Activated naive CD4-positive, alpha-beta T cell treated with anti-CD3 and anti-CD28 coated beads for 36 hours (primary cell): ENCODE measurements at regions of chr16 and their contacts with region 1.

Region 1: DNA sequence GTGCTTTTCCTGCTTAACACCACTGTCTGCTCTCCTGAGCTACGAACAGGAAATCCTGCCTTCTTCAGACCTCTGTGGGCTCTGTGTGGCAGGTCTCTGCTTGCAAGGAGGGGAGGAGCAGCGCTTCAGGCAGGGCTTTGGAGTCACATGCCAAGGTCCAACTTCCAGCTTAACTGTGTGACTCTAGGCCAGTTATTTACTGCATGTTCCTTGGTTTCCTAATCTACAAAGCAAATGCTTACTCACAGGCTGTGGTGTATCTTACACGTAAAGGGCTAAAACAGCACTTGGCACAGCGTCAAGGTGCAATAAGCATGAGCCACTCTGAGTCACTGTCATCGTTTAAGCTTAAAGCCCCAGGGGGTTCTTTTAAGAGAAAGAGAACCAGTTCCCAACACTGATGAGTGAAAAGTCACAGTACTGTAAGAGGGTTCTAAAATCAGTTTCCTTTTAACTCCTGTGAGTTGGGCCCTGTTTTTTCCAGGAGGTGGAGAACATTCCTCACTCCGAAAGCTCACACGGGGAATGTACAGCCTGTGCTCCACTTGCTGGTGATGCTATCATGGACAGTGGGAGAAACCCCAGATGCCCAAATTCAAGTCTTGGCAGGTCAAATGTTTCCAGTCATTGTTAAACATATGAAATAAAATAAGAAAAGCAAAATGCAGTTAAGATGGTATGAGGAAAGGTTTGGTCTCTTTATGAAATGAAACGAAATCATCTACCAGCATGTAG is 54.1 kb upstream of the BCAR1 start:
- DNase-seq: peak; percentile 94
- H3K4me3 Mint-ChIP-seq: peak overlapping the region; percentile 36
- H3K27ac Mint-ChIP-seq: peak overlapping the region; percentile 90
- H3K4me1 Mint-ChIP-seq: peaks cover 29% of the 10 kb centered on the region
- H3K27me3 Mint-ChIP-seq: no peaks in the 10 kb centered on the region

Region 2: DNA sequence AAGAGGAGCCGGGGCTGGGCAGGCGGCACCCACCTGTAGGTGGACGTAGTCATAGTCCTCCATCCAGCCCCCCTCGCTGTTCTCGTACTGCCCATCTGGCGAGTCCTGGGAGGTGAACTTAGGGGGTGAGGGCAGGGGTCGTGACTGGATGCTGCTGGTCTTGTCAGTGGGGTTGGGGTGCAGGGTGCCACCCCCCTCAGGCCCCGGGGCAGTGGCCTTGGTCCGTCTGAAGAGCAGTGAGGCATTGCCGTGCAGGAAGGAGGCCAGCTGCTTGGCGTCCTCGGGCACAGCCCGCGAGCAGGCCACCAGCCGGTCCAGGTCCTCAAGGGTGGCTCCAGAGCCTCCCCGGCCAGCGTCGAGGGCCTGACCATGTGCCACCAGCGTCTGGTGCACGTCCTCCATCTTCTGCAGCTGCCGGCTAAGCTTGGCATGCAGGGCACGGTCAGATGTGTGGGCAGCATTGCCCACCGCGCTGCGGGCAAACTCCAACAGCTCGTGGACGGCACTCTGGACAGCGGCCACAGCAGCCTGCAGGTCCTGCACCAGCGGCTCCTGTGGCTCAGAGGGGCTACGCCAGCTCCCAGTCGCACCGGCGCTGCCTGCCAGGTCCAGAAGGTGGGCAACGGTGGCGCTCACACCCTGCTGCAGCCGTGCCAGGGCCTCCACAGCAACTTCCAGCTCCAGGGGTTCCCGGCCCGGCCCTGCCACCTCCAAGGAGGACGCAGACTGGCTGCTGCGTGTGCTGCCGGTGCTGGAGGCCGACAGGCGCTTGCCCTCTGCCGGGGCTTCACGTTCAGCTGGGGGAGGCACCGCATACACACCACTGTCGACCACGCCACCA is 70.5 kb before region 1 on chr16:
- CTCF ChIA-PET with region 1: interaction called, 16 read pairs
- intact Hi-C with region 1: loop called (anchors 5 kb)
- DNase-seq: no peak
- H3K4me3 Mint-ChIP-seq: no peak overlapping the region
- H3K27ac Mint-ChIP-seq: no peak overlapping the region
- H3K4me1 Mint-ChIP-seq: peaks cover 6% of the 10 kb centered on the region
- H3K27me3 Mint-ChIP-seq: no peaks in the 10 kb centered on the region

Region 3: GRCh38 chr16:75294773-75295459 is 10.6 kb before region 1 on chr16:
- CTCF ChIA-PET with region 1: no interaction called
- intact Hi-C with region 1: no loop called
- DNase-seq: no peak
- H3K4me3 Mint-ChIP-seq: no peak overlapping the region
- H3K27ac Mint-ChIP-seq: no peak overlapping the region
- H3K4me1 Mint-ChIP-seq: no peaks in the 10 kb centered on the region
- H3K27me3 Mint-ChIP-seq: no peaks in the 10 kb centered on the region

Region 4: GRCh38 chr16:75319513-75320411 is 14.2 kb after region 1 on chr16:
- CTCF ChIA-PET with region 1: interaction called, 3 read pairs
- intact Hi-C with region 1: loop called (anchors 1 kb)
- DNase-seq: peak; percentile 40
- H3K4me3 Mint-ChIP-seq: no peak overlapping the region
- H3K27ac Mint-ChIP-seq: no peak overlapping the region
- H3K4me1 Mint-ChIP-seq: peaks cover 35% of the 10 kb centered on the region
- H3K27me3 Mint-ChIP-seq: no peaks in the 10 kb centered on the region

Region 5: DNA sequence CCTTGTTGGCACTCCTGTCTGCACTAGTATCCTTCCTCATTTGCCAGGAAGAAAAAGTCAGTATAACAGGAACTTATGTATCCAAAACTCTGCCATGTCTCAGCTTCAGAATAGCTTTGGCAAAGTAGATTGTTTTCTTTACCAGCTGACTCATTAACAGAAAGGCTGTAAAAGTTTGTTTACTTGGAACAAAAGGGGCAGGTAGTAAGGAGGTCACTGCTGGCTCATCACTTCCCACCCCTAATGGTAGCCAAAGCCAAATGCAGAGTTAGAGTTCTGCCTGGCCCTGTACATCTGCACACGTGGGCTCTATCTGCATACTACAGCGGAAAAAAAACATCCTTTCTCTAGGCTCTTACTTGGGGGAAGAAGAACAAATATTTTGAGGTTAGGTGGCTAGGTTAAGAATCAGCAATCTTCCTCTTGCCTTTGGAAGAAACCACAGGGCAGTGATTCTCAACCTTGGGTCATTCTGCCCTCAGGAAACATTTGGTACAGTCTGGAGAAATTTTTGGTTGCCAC is 36.8 kb after region 1 on chr16:
- CTCF ChIA-PET with region 1: no interaction called
- intact Hi-C with region 1: no loop called
- DNase-seq: no peak
- H3K4me3 Mint-ChIP-seq: no peak overlapping the region
- H3K27ac Mint-ChIP-seq: no peak overlapping the region
- H3K4me1 Mint-ChIP-seq: no peaks in the 10 kb centered on the region
- H3K27me3 Mint-ChIP-seq: no peaks in the 10 kb centered on the region

Region 6: GRCh38 chr16:75432828-75433731 is 127.5 kb after region 1 on chr16 and contains the start of gene CFDP1:
- CTCF ChIA-PET with region 1: no interaction called
- intact Hi-C with region 1: loop called (anchors 1 kb)
- DNase-seq: peak; percentile 96
- H3K4me3 Mint-ChIP-seq: peak within 1 kb of the TSS; percentile 81
- H3K27ac Mint-ChIP-seq: peak within 1 kb of the TSS; percentile 93
- H3K4me1 Mint-ChIP-seq: peaks cover 30% of the 10 kb centered on the region
- H3K27me3 Mint-ChIP-seq: no peaks in the 10 kb centered on the region
- total RNA-seq, gene CFDP1: 37.2 to 44.1 TPM

Region 7: GRCh38 chr16:75647492-75648264 is 342.1 kb after region 1 on chr16 and contains the starts of genes KARS1 and TERF2IP:
- CTCF ChIA-PET with region 1: no interaction called
- intact Hi-C with region 1: loop called (anchors 1 kb)
- DNase-seq: peak; percentile 96
- H3K4me3 Mint-ChIP-seq: peak within 1 kb of the TSS; percentile 96
- H3K27ac Mint-ChIP-seq: peak within 1 kb of the TSS; percentile 98
- H3K4me1 Mint-ChIP-seq: peaks cover 62% of the 10 kb centered on the region
- H3K27me3 Mint-ChIP-seq: no peaks in the 10 kb centered on the region
- total RNA-seq, gene KARS1: 371 to 385 TPM
- total RNA-seq, gene TERF2IP: 78.6 to 79.0 TPM